IMR-90 (cell line): ENCODE measurements at regions of chrX and their contacts with region 1.

Region 1: GRCh38 chrX:55488593-55489313 is 895 bp downstream of the USP51 start:
- DNase-seq: peak; percentile 8
- ATAC-seq: peak; percentile 82
- H3K4me3 ChIP-seq: peak overlapping the region; percentile 86
- H3K27ac ChIP-seq: peak overlapping the region; percentile 93
- H3K4me1 ChIP-seq: no peaks in the 10 kb centered on the region
- H3K27me3 ChIP-seq: peaks cover 2% of the 10 kb centered on the region
- CTCF ChIP-seq: no peak
- POLR2A ChIP-seq: no peak
- RAD21 ChIP-seq: no peak

Region 2: GRCh38 chrX:55717521-55718497 is 229.1 kb after region 1 on chrX and contains the start of gene RRAGB:
- CTCF ChIA-PET with region 1: no interaction called
- POLR2A ChIA-PET with region 1: no interaction called
- dilution Hi-C with region 1: no loop called
- in situ Hi-C with region 1: loop called (anchors 25 kb)
- intact Hi-C with region 1: no loop called
- DNase-seq: peak; percentile 91
- ATAC-seq: peak; percentile 100
- H3K4me3 ChIP-seq: peak within 1 kb of the TSS; percentile 69
- H3K27ac ChIP-seq: peak within 1 kb of the TSS; percentile 44
- H3K4me1 ChIP-seq: no peaks in the 10 kb centered on the region
- H3K27me3 ChIP-seq: no peaks in the 10 kb centered on the region
- CTCF ChIP-seq: peak; percentile 41
- POLR2A ChIP-seq: no peak
- RAD21 ChIP-seq: no peak
- total RNA-seq, gene RRAGB: 9.1 and 17.2 TPM in 2 replicates